OCI-LY7 (cell line): ENCODE measurements at regions of chr19 and their contacts with region 1.

Region 1: DNA sequence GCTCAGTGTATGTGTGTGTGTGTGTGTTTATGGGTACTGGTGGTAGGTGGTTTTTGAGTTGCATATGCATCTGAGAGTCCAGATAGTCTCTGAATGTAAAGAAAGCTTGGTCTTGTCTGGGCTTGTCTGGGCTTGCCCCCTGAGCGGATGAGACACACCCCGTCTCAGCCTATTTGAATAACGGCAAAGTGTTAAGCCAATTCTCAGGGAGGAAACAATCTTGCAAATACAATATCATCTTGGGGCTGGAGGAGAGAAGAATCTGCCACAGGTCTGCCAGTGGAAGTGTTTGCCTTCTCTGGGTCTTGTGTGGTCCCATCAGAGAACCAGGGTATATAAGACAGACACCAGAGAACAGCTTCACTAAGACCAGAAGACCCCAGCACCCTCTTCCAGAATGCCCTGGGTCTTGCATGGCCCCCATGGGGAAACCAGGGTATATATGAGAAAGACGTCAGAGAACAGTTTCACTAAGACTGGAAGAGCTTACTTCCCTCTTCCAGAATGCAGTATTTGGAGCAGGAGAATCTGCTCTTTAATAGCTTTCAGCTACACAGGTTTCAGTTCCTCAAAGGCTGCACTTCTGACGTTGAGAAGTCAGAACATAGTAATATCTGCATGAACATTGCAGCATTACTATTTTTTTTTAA is 13.3 kb downstream of the CD70 start:
- DNase-seq: peak; percentile 96
- H3K4me3 ChIP-seq: peak overlapping the region; percentile 56
- H3K27ac ChIP-seq: peak overlapping the region; percentile 92
- H3K4me1 ChIP-seq: peaks cover 85% of the 10 kb centered on the region
- CTCF ChIP-seq: no peak

Region 2: DNA sequence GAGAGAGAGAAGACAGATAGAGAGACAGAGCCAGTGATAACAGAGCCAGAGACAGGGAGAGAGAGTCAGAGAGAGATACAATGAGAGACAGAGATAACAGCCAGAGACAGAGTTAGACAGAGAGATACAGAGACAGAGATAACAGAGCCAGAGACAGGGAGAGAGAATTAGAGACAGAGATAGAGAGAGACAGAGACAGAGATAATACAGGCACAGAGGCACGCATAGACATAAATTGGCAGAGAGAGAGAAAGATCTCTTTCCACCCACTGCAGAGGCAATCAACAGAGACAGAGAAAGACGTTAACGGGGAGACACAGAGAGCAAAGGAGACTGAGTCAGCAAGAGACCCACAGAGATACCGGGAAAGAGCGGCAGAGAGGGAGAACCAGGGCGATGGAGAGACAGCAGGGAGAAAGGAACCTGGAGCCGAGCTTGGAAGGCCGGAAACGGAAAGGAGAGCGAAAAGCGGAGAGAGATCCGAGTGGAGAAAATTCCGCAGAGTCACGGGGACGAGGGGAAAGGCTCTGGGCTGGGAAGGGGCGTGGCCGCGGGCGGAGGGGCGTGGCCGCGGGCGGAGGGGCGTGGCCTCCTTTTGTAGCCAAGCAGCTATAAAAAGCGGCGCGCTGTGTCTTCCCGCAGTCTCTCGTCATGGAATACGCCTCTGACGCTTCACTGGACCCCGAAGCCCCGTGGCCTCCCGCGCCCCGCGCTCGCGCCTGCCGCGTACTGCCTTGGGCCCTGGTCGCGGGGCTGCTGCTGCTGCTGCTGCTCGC is 47.0 kb before region 1 on chr19 and contains the start of gene TNFSF9:
- CTCF ChIA-PET with region 1: no interaction called
- POLR2A ChIA-PET with region 1: interaction called, 8 read pairs
- intact Hi-C with region 1: loop called (anchors 2 kb)
- DNase-seq: peak; percentile 95
- H3K4me3 ChIP-seq: peak within 1 kb of the TSS; percentile 91
- H3K27ac ChIP-seq: peak within 1 kb of the TSS; percentile 91
- H3K4me1 ChIP-seq: peaks cover 57% of the 10 kb centered on the region
- CTCF ChIP-seq: no peak
- total RNA-seq, gene TNFSF9: 18.1 and 22.3 TPM in 2 replicates

Region 3: DNA sequence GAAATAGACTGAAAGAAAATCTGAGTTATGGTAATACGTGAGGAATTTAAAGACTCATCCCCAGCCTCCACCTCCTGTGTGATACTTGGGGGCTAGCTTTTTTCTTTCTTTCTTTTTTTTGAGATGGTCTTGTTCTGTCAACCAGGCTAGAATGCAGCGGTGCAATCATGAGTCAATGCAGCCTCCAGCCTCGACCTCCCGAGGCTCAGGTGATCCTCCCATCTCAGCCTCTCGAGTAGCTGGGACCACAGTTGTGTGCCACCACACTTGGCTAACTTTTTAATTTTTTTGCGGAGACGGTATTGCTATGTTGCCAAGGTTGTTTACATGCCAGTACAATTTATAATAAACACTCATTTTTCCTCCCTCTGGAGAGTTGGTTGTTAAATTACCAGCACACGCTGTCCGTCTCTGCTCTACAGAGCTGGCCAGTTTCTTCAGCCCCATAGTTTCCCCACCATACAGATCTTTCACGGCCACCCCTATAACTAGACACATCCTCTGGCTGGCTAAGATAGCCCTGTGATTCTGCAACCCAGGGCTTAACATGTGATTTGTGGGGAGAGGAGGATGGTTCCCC is 42.0 kb before region 1 on chr19:
- CTCF ChIA-PET with region 1: no interaction called
- POLR2A ChIA-PET with region 1: interaction called, 8 read pairs
- intact Hi-C with region 1: loop called (anchors 2 kb)
- DNase-seq: no peak
- H3K4me3 ChIP-seq: no peak overlapping the region
- H3K27ac ChIP-seq: peak overlapping the region; percentile 90
- H3K4me1 ChIP-seq: peaks cover 49% of the 10 kb centered on the region
- CTCF ChIP-seq: no peak